Naive thymus-derived CD8-positive, alpha-beta T cell (primary cell): ENCODE measurements at regions of chr19 and their contacts with region 1.

Region 1: GRCh38 chr19:9857920-9858746 is 23.0 kb downstream of the PIN1 start:
- DNase-seq: peak in 5 of 10 donors; percentile 21 to 62 (median 51)
- ATAC-seq: peak; percentile 84 to 88
- H3K4me3 Mint-ChIP-seq: peak overlapping the region; percentile 90 to 99 (median 95)
- H3K27ac Mint-ChIP-seq: peak overlapping the region; percentile 94 to 99 (median 98)
- H3K4me1 Mint-ChIP-seq: peaks cover 39 to 92% (median 72%) of the 10 kb centered on the region in 4 donors
- H3K27me3 Mint-ChIP-seq: no peaks in the 10 kb centered on the region

Region 2: DNA sequence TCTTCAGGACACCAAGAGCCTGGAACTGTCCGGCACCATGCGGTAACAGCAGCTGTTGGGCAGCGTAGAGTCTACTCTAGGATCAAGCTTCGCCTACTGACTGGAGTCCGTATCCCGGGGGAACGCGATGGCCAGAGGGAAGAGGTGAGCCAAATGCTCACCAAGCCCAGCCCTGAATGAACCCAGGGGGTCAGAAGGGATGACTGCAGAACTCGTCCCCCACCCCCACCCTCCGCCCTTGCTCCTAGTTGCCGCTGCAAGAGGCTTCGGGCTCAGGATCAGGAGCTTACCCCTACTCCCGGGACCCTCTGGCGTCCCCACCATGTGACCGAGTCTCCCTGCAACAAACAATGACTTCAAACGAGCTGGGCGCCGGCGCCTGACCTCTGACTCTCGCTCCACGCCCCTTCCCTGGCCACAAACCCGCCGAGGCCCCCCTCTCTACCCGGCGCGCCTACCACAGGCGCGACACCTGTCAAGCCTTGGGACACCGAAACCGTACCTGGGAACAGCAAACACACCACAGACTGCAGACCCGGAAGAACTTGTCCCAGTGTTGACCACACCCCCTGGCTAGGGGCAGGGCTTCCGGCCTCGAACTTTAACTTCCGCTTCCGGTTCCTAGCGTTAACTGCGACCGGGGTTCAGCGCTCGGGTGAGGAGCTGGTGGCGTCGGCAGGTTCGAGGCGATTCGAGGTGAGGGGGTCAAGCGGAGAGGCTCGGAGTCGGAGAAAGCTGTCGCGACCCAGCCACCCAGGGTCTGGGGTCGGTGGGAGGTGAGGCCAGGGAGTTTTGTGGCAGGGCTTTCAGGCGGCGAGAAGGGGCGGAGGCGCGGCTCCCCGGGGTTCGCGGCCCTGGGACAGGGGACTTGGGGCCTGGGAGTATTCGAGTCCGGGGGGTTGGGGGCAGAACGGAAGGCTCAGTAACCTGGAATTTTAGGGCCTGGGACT is 30.6 kb before region 1 on chr19 and contains the start of gene UBL5:
- POLR2A ChIA-PET with region 1: interaction called, 15 read pairs
- DNase-seq: peak; percentile 74 to 94 (median 86)
- ATAC-seq: peak; percentile 95 to 98
- H3K4me3 Mint-ChIP-seq: peak within 1 kb of the TSS; percentile 98 to 100 (median 100)
- H3K27ac Mint-ChIP-seq: peak within 1 kb of the TSS; percentile 98 to 99 (median 99)
- H3K4me1 Mint-ChIP-seq: peaks cover 14 to 41% (median 29%) of the 10 kb centered on the region in 4 donors
- H3K27me3 Mint-ChIP-seq: no peaks in the 10 kb centered on the region
- polyA plus RNA-seq, gene UBL5: 694 to 819 (median 701) TPM

Region 3: DNA sequence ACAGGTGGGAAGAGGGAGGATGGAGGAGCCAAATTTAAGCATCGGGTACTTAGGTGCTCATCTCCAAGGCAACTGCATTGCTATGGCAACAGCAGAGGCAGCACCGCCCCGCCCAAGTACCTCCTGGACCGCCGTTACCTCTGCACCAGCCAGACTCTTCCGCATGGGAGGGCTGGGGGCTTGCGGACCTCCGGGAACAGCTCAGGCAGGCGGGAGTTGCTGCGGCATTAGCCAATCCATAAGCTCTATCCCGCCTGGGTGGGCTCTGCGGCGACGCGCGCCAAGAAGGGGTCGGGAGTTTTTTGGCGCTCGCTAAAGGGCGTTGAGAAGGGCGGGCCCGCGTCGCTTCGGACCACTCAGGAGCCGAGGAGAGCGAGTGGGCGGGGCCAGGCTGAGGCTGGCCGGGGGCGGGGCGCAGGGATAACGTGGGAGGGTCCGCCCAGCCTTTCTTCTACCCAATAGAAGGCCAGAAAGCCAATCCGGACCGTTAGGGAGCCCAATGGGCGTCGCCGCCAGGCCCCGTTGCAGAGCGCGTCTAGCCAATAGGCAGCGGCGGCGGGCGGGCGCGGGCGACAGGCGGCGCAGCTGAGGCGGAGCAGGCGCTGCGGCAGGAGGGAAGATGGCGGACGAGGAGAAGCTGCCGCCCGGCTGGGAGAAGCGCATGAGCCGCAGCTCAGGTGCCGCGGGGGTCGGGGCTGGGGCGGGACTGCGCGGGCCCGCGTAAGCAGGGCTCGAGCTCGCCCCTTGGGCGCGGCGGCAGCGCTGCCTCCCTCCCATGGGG is 23.2 kb before region 1 on chr19 and contains the start of gene PIN1:
- POLR2A ChIA-PET with region 1: interaction called, 12 read pairs
- DNase-seq: peak; percentile 97 to 100 (median 99)
- ATAC-seq: peak; percentile 96
- H3K4me3 Mint-ChIP-seq: peak within 1 kb of the TSS; percentile 89 to 97 (median 94)
- H3K27ac Mint-ChIP-seq: peak within 1 kb of the TSS; percentile 77 to 98 (median 94)
- H3K4me1 Mint-ChIP-seq: peaks cover 7 to 30% (median 14%) of the 10 kb centered on the region in 4 donors
- H3K27me3 Mint-ChIP-seq: no peaks in the 10 kb centered on the region
- polyA plus RNA-seq, gene PIN1: 85.3 to 126 (median 95.8) TPM

Region 4: DNA sequence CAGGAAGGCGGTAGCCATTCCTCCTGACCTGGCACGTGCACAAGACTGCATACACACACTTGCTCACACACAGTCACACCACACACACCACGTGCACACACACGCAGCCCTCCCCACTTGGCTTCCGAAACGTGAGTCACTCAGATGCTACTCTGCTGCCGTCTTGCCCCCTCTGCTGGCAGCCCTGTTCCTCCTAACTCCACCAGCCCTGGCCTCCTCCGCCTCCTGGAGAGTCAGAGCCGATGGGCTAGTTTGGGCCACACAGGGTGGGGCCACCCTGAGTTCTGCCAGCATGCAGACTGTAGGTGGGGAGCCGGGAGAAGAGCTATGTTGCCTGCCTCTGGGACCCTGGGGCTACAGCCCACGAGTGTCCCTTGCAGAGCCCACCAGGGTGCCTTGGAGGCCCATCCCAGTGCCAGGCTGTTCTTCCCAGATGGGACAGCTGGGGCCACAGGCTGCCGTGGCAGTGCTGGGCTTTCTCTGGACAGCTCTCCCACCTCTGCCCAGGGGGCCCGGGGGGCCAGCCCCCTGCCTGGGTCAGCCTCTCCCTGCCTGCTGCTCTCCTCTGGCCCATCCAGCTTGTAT is 11.0 kb before region 1 on chr19:
- POLR2A ChIA-PET with region 1: interaction called, 15 read pairs
- DNase-seq: peak in 3 of 10 donors; percentile 22 to 28 (median 27)
- ATAC-seq: peak; percentile 46 to 68
- H3K4me3 Mint-ChIP-seq: no peak overlapping the region
- H3K27ac Mint-ChIP-seq: peak overlapping the region in 6 of 10 donors; percentile 52 to 90 (median 78)
- H3K4me1 Mint-ChIP-seq: peaks cover 12 to 48% (median 22%) of the 10 kb centered on the region in 4 donors
- H3K27me3 Mint-ChIP-seq: no peaks in the 10 kb centered on the region

Region 5: DNA sequence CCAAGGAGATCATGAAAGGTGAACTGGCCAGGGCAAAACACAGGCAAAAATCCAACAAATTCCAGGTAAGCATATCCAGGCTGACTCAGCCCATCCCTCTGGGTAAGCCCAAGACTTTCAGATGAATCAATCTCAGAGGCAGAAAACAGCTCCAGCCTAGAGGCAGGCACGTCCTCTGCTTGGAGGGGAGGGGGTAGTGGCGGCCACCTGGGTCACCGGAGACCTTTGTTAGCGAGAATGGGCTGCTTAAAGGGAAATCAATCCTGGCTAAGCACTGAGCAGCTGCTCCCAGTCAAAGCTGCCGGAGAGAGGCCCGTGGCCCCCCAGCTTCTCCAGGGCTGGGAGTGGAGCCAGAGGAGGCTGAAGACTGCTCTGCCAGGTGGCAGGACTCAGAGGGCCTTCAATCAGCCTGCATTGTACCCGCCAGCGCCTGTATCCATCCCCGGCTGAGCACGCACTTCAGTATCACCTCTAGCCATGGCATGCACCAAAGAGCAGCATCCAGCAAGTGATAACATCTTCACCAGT is 25.2 kb after region 1 on chr19:
- POLR2A ChIA-PET with region 1: no interaction called
- DNase-seq: no peak
- ATAC-seq: no peak
- H3K4me3 Mint-ChIP-seq: no peak overlapping the region
- H3K27ac Mint-ChIP-seq: no peak overlapping the region
- H3K4me1 Mint-ChIP-seq: peaks cover 0 to 5% (median under 1%) of the 10 kb centered on the region in 4 donors
- H3K27me3 Mint-ChIP-seq: peaks cover 0 to 3% (median 0%) of the 10 kb centered on the region in 5 donors

Region 6: GRCh38 chr19:9923440-9923839 is 65.3 kb after region 1 on chr19:
- POLR2A ChIA-PET with region 1: no interaction called
- DNase-seq: peak in 1 of 10 donors; percentile 8
- ATAC-seq: no peak
- H3K4me3 Mint-ChIP-seq: no peak overlapping the region
- H3K27ac Mint-ChIP-seq: no peak overlapping the region
- H3K4me1 Mint-ChIP-seq: no peaks in the 10 kb centered on the region
- H3K27me3 Mint-ChIP-seq: peaks cover 4 to 31% (median 15%) of the 10 kb centered on the region in 5 donors

Region 7: DNA sequence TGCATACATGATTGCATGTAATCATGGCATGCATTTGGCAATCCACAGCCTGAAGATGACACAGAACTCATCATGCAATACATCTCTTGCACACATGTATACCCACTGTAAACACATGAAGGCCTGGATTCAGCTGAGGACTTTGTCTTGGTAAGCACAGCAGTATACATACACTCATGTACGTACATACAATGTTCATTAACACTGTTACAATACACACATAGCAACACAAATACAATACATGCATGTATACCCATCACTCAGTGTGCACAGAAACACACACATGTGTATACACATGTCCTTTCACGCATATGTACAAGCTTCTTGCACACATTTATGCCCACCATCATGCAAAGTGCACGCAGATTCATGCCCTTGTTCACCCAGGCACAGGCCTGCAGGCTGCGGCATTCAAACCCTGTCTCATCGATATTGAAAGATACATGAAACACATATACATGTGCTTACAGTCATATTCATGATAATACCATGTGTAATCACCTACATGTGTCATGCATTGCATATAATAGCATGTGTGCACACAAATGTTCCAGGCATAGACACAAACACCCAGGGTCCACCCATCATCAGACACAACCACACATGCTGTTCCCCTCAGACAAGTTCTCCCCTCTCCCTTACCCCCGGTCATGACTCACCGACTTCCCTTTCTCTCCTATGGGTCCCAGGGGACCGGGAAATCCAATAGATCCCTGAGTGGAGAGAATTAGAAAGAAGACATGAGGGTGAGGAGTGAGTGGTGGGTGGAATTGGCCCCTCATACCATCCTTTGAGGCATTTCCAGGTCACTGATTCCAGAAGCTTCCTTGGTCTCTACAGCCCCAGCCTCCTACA is 123.5 kb after region 1 on chr19:
- POLR2A ChIA-PET with region 1: no interaction called
- DNase-seq: no peak
- ATAC-seq: no peak
- H3K4me3 Mint-ChIP-seq: no peak overlapping the region
- H3K27ac Mint-ChIP-seq: no peak overlapping the region
- H3K4me1 Mint-ChIP-seq: peaks cover 0 to 5% (median 0%) of the 10 kb centered on the region in 4 donors
- H3K27me3 Mint-ChIP-seq: peaks cover 3 to 35% (median 20%) of the 10 kb centered on the region in 5 donors

Region 8: DNA sequence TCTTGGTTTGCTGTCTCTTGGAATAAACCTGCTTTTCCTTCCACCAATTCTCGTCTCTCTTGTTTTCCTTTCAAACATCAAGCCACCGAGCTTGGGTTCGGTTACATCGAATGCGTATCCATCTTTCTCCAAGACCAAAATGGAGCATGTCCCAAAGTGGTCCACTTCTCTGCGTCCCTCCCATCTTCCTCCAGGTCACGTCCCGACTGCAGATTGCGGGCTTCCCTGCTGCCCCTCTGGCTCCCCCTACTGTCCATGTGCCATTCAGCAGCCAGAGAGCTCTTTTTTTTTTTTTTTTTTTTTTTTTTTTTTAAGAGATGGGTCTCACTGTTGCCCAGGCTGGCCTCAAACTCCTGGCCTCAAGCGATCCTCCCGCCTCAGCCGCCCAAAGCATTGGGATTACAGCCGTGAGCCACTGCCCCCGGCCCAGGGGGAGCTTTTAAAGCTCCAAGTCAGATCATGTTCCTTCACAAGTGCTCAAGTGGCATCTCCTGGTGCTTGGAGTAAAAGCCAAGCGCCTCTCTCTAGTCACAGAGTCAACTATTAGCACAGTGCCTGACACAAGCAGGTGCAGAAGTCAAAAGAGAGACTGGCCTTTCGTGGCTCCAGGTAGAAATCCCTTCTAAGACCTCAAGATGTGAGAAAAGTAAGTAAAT is 142.2 kb after region 1 on chr19:
- POLR2A ChIA-PET with region 1: no interaction called
- DNase-seq: peak; percentile 41 to 76 (median 58)
- ATAC-seq: no peak
- H3K4me3 Mint-ChIP-seq: peak overlapping the region in 2 of 10 donors; percentile 2 to 31
- H3K27ac Mint-ChIP-seq: peak overlapping the region in 2 of 10 donors; percentile 63 to 70
- H3K4me1 Mint-ChIP-seq: peaks cover 0 to 7% (median 5%) of the 10 kb centered on the region in 4 donors
- H3K27me3 Mint-ChIP-seq: peaks cover 28 to 73% (median 42%) of the 10 kb centered on the region in 5 donors